ENCODE measurements at regions of chr12 and their contacts with region 1.

Region 1: DNA sequence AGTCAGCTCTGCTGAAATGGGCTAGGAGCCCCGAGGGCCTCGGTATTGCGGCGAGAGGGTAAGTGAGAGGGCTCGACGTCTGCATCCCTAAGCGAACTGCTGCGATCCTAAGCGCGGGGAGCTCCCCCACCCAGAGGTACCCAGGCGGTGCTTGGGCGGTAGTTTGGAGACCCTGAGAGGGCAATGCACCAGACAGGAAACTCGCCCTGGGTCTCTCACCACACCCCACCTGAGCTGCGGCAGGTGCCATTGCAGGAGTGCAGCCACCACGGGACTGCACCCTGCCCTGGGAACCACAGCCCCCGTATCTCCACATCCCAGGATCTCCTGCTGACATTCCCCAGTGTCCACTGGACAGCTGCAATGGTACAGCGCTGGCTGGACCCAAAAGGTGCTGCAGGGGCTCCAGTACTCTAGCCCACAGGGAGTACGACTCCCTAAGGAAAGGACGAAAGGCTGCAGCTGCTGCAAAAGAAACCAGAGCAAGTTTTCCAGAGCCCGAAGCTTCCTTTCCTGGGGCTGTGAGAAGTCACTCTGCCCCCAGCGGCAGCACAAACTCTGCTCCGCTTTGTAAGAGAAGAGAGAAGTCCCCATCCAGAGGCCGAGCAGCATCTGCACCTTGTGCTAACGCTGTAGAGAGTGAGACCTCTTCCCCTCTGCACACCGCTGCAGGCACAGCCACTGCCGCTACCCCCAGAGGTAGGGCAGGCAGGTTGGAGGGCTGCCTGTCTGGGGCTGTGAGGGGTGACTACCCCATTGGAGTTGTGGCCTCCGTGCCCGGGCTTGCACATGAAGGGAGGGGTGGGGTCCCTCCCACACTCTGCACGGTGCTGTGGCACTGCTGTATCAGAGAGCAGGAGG is 31.1 kb upstream of the MON2 start:
- DNase-seq: peak in 4 of 5 donors; percentile 17 to 22 (median 20)
- H3K4me3 ChIP-seq: peak overlapping the region; percentile 64 to 78
- H3K4me3 Mint-ChIP-seq: peak overlapping the region; percentile 79 to 90 (median 86)
- H3K27ac ChIP-seq: no peak overlapping the region
- H3K27ac Mint-ChIP-seq: peak overlapping the region in 3 of 7 donors; percentile 2 to 33 (median 29)
- H3K4me1 ChIP-seq: peaks cover 21% of the 10 kb centered on the region
- H3K4me1 Mint-ChIP-seq: peaks cover 8 to 21% (median 16%) of the 10 kb centered on the region in 4 donors
- H3K27me3 ChIP-seq: peaks cover 11% of the 10 kb centered on the region
- H3K27me3 Mint-ChIP-seq: peaks cover 5 to 6% of the 10 kb centered on the region in 2 donors

Region 2: GRCh38 chr12:62458626-62459025 is 23.1 kb after region 1 on chr12:
- CTCF ChIA-PET with region 1: interaction called, 25 read pairs
- POLR2A ChIA-PET with region 1: no interaction called
- intact Hi-C with region 1: no loop called
- DNase-seq: no peak
- H3K4me3 ChIP-seq: no peak overlapping the region
- H3K4me3 Mint-ChIP-seq: no peak overlapping the region
- H3K27ac ChIP-seq: no peak overlapping the region
- H3K27ac Mint-ChIP-seq: no peak overlapping the region
- H3K4me1 ChIP-seq: no peaks in the 10 kb centered on the region
- H3K4me1 Mint-ChIP-seq: no peaks in the 10 kb centered on the region
- H3K27me3 ChIP-seq: no peaks in the 10 kb centered on the region
- H3K27me3 Mint-ChIP-seq: peaks cover 3 to 6% of the 10 kb centered on the region in 2 donors

Region 3: GRCh38 chr12:62522984-62523383 is 87.5 kb after region 1 on chr12:
- CTCF ChIA-PET with region 1: interaction called, 6 read pairs
- POLR2A ChIA-PET with region 1: no interaction called
- intact Hi-C with region 1: loop called (anchors 5 kb)
- DNase-seq: no peak
- H3K4me3 ChIP-seq: no peak overlapping the region
- H3K4me3 Mint-ChIP-seq: no peak overlapping the region
- H3K27ac ChIP-seq: no peak overlapping the region
- H3K27ac Mint-ChIP-seq: peak overlapping the region in 3 of 7 donors; percentile 3 to 67 (median 42)
- H3K4me1 ChIP-seq: peaks cover 25% of the 10 kb centered on the region
- H3K4me1 Mint-ChIP-seq: peaks cover 18 to 37% (median 25%) of the 10 kb centered on the region in 4 donors
- H3K27me3 ChIP-seq: no peaks in the 10 kb centered on the region
- H3K27me3 Mint-ChIP-seq: no peaks in the 10 kb centered on the region

Region 4: DNA sequence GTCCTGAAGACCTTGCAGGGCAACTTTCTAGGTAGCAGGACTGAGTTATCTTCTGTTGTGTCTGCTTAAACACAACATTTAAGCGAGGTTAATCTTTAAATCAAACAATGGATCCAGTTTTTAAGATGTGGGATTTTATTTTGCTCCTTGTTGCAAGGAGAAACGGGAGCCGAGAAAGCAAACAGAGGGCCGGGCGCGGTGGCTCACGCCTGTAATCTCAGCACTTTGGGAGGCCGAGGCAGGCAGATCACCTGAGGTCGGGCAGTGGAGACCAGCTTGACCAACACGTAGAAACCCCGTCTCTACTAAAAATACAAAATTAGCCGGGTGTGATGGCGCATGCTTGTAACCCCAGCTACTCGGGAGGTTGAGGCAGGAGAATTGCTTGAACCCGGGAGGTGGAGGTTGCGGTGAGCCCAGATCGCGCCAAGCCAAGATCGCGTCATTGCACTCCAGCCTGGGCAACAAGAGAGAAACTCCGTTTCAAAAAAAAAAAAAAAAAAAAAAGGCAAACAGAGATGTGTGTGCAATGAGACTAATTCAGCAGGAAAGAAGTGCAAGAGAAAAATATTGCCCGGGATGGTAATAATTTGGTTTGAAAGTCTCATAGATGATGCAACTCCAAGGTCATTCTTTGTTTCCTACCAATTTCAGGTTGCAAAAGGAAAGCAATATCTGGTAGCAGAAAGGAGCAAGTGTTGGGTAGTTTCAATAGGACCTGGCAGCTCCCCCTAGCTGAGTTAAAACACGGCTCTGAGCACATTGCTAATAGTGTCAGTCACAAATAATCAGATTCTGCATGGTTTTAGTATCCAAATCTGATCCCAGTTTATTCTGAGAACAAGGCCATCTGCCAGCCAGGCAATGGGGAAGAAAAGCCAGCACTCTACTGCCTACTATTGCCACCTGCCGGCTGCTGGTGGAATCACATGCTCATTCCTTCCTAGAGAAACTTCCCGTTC is 358.0 kb after region 1 on chr12:
- CTCF ChIA-PET with region 1: interaction called, 162 read pairs
- POLR2A ChIA-PET with region 1: interaction called, 3 read pairs
- intact Hi-C with region 1: loop called (anchors 1 kb)
- DNase-seq: peak; percentile 51 to 69 (median 66)
- H3K4me3 ChIP-seq: no peak overlapping the region
- H3K4me3 Mint-ChIP-seq: no peak overlapping the region
- H3K27ac ChIP-seq: no peak overlapping the region
- H3K27ac Mint-ChIP-seq: no peak overlapping the region
- H3K4me1 ChIP-seq: no peaks in the 10 kb centered on the region
- H3K4me1 Mint-ChIP-seq: peaks cover 0 to 2% (median 0%) of the 10 kb centered on the region in 4 donors
- H3K27me3 ChIP-seq: no peaks in the 10 kb centered on the region
- H3K27me3 Mint-ChIP-seq: peaks cover 3 to 5% of the 10 kb centered on the region in 2 donors

Region 5: GRCh38 chr12:62813031-62813829 is 377.7 kb after region 1 on chr12:
- CTCF ChIA-PET with region 1: interaction called, 8 read pairs
- POLR2A ChIA-PET with region 1: no interaction called
- intact Hi-C with region 1: loop called (anchors 1 kb)
- DNase-seq: peak in 2 of 5 donors; percentile 5
- H3K4me3 ChIP-seq: no peak overlapping the region
- H3K4me3 Mint-ChIP-seq: peak overlapping the region in 6 of 8 donors; percentile 31 to 72 (median 49)
- H3K27ac ChIP-seq: no peak overlapping the region
- H3K27ac Mint-ChIP-seq: peak overlapping the region in 1 of 7 donors; percentile 70
- H3K4me1 ChIP-seq: peaks cover 10% of the 10 kb centered on the region
- H3K4me1 Mint-ChIP-seq: peaks cover 5 to 12% (median 9%) of the 10 kb centered on the region in 4 donors
- H3K27me3 ChIP-seq: peaks cover 6% of the 10 kb centered on the region
- H3K27me3 Mint-ChIP-seq: peaks cover 11 to 17% of the 10 kb centered on the region in 2 donors

Measured in CD4-positive, alpha-beta memory T cell (primary cell).